Activated CD8-positive, alpha-beta T cell treated with anti-CD3 and anti-CD28 coated beads, Interleukin-2, amount 10 ng/mL, durations not matched to agents 7 days and 5 days (primary cell): ENCODE measurements at regions of chr20 and their contacts with region 1.

Region 1: GRCh38 chr20:53611449-53611894 is 17.8 kb upstream of the ZNF217 start:
- DNase-seq: no peak
- ATAC-seq: no peak
- H3K4me3 Mint-ChIP-seq: no peak overlapping the region
- H3K27ac Mint-ChIP-seq: no peak overlapping the region
- H3K4me1 Mint-ChIP-seq: peaks cover 51% of the 10 kb centered on the region
- H3K27me3 Mint-ChIP-seq: no peaks in the 10 kb centered on the region

Region 2: DNA sequence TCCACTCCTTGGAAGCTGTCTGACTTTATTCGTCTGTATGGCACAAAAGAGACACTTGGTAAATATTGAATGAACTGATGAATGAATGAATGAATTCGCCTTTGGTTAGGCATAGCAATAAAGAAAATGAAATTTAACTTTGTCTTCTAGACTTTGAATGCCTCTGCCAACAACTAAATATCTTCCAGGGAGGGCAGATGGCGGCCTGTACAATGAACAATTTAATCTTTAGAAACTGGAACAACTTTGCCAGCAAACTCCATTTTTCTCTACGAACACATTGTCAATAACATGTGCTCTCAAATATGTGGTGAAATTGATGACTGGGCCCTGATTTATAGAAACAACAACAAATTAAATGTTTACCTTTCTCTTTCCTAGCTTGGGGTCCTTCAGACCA is 158.4 kb before region 1 on chr20:
- CTCF ChIA-PET with region 1: no interaction called
- POLR2A ChIA-PET with region 1: no interaction called
- DNase-seq: no peak
- ATAC-seq: no peak
- H3K4me3 Mint-ChIP-seq: no peak overlapping the region
- H3K27ac Mint-ChIP-seq: no peak overlapping the region
- H3K4me1 Mint-ChIP-seq: no peaks in the 10 kb centered on the region
- H3K27me3 Mint-ChIP-seq: no peaks in the 10 kb centered on the region

Region 3: GRCh38 chr20:53623454-53624211 is 12.2 kb after region 1 on chr20:
- CTCF ChIA-PET with region 1: interaction called, 56 read pairs
- POLR2A ChIA-PET with region 1: interaction called, 66 read pairs
- DNase-seq: peak; percentile 56
- ATAC-seq: peak; percentile 75
- H3K4me3 Mint-ChIP-seq: peak overlapping the region; percentile 72
- H3K27ac Mint-ChIP-seq: peak overlapping the region; percentile 97
- H3K4me1 Mint-ChIP-seq: peaks cover 56% of the 10 kb centered on the region
- H3K27me3 Mint-ChIP-seq: no peaks in the 10 kb centered on the region

Region 4: DNA sequence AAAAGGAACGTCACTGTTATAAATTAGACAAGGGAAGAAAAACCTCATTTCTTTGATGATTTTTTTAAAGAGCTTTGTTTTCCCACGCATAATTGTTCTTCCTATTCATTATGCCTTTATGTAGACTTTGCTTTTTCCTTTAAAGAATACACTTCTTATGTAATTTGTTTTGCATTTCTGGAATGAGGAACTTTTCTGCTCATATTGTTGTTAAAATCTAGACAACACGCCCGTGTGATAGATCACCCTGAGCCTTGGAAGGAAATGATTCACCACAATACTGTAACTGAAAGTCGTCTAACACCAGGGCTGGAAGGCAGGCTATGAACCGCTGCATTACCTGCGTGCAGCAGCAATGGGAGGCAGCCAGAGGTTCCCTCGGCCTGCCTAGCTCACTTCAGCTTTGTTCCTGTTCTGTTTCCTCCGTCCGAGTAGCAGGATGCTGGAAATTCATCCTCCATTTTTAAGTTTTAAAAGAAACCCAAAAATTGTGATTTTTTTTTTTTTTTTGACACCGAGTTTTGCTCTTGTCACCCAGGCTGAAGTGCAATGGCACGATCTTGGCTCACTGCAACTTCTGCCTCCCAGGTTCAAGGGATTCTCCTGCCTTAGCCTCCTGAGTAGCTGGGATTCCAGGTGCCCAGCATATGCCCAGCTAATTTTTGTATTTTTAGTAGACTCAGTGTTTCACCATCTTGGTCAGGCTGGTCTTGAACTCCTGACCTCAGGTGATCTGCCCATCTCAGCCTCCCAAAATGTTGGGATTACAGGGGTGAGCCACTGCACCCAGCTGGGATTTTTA is 31.8 kb after region 1 on chr20:
- CTCF ChIA-PET with region 1: interaction called, 8 read pairs
- POLR2A ChIA-PET with region 1: interaction called, 10 read pairs
- DNase-seq: peak; percentile 83
- ATAC-seq: peak; percentile 94
- H3K4me3 Mint-ChIP-seq: peak overlapping the region; percentile 56
- H3K27ac Mint-ChIP-seq: peak overlapping the region; percentile 87
- H3K4me1 Mint-ChIP-seq: peaks cover 55% of the 10 kb centered on the region
- H3K27me3 Mint-ChIP-seq: no peaks in the 10 kb centered on the region